ENCODE measurements at regions of chr21 and their contacts with region 1.

Region 1: GRCh38 chr21:45319461-45320211 is 31.9 kb upstream of the POFUT2 start:
- DNase-seq: no peak
- ATAC-seq: no peak
- H3K4me3 Mint-ChIP-seq: no peak overlapping the region
- H3K27ac Mint-ChIP-seq: no peak overlapping the region
- H3K4me1 Mint-ChIP-seq: peaks cover 11% of the 10 kb centered on the region
- H3K27me3 Mint-ChIP-seq: no peaks in the 10 kb centered on the region; the same call in 1 of the 2 replicates
- CTCF ChIP-seq: no peak

Region 2: GRCh38 chr21:45287438-45288391 is 31.9 kb before region 1 on chr21 and contains the start of gene POFUT2:
- CTCF ChIA-PET with region 1: interaction called, 12 read pairs
- POLR2A ChIA-PET with region 1: no interaction called
- DNase-seq: peak; percentile 98
- ATAC-seq: peak; percentile 56
- H3K4me3 Mint-ChIP-seq: peak within 1 kb of the TSS; percentile 74
- H3K27ac Mint-ChIP-seq: peak within 1 kb of the TSS; percentile 36; the same call in 1 of the 2 replicates
- H3K4me1 Mint-ChIP-seq: peaks cover 4% of the 10 kb centered on the region
- H3K27me3 Mint-ChIP-seq: no peaks in the 10 kb centered on the region
- CTCF ChIP-seq: no peak
- total RNA-seq, gene POFUT2: 37.1 to 41.4 TPM (median 39.7 TPM) in 3 replicates